Activated B cell treated with CpG ODN at 0.5 μM for 24 hours (primary cell): ENCODE measurements at regions of chr19 and their contacts with region 1.

Region 1: GRCh38 chr19:34336781-34337271 is 28.2 kb upstream of the GPI start:
- DNase-seq: no peak
- ATAC-seq: no peak
- H3K4me3 Mint-ChIP-seq: no peak overlapping the region
- H3K27ac Mint-ChIP-seq: no peak overlapping the region
- H3K4me1 Mint-ChIP-seq: peaks cover 5% of the 10 kb centered on the region
- H3K27me3 Mint-ChIP-seq: no peaks in the 10 kb centered on the region
- CTCF ChIP-seq: peak; percentile 20

Region 2: DNA sequence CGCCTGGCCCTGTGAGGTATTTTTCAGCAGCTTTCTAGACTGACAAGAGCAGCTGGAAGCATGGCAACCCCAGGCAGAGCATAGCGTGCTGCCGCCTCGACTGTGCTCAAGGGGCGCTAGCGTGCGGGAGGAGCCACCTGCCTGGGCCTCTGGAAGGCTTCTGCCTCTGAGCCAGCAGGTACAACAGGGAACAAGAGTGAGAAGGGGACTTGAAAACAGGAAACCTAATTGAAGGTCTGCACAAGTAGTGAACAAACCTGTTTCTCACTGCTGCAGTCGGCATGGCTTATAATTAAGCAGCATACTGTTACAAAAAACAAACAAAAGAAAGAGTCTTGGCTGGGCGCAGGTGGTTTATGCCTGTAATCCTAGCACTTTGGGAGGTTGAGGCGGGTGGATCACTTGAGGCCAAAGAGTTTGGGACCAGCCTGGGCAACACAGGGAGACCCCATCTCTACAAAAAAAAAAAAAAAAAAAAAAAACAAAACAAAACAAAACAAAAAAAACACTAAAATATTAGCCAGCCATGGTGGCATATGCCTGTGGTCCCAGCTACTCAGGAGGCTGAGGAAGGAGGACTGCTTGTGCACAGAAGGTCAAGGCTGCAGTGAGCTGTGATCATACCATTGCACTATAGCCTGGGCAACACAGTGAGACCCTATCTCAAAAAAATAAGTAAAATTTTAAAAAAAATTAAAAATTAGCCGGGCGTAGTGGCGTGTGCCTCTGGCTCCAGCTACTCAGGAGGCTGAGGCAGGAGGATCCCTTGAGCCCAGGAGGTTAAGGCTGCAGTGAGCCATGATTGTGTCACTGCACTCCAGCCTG is 95.1 kb before region 1 on chr19:
- CTCF ChIA-PET with region 1: no interaction called
- POLR2A ChIA-PET with region 1: no interaction called
- intact Hi-C with region 1: loop called (anchors 1 kb)
- DNase-seq: no peak
- ATAC-seq: peak; percentile 50
- H3K4me3 Mint-ChIP-seq: no peak overlapping the region
- H3K27ac Mint-ChIP-seq: no peak overlapping the region
- H3K4me1 Mint-ChIP-seq: peaks cover 3% of the 10 kb centered on the region
- H3K27me3 Mint-ChIP-seq: no peaks in the 10 kb centered on the region
- CTCF ChIP-seq: no peak

Region 3: GRCh38 chr19:34692549-34692948 is 355.7 kb after region 1 on chr19:
- CTCF ChIA-PET with region 1: no interaction called
- POLR2A ChIA-PET with region 1: no interaction called
- intact Hi-C with region 1: no loop called
- DNase-seq: no peak
- ATAC-seq: no peak
- H3K4me3 Mint-ChIP-seq: no peak overlapping the region
- H3K27ac Mint-ChIP-seq: no peak overlapping the region
- H3K4me1 Mint-ChIP-seq: no peaks in the 10 kb centered on the region
- H3K27me3 Mint-ChIP-seq: peaks cover 24% of the 10 kb centered on the region
- CTCF ChIP-seq: no peak